ENCODE measurements at regions of chr7 and their contacts with region 1.

Region 1: DNA sequence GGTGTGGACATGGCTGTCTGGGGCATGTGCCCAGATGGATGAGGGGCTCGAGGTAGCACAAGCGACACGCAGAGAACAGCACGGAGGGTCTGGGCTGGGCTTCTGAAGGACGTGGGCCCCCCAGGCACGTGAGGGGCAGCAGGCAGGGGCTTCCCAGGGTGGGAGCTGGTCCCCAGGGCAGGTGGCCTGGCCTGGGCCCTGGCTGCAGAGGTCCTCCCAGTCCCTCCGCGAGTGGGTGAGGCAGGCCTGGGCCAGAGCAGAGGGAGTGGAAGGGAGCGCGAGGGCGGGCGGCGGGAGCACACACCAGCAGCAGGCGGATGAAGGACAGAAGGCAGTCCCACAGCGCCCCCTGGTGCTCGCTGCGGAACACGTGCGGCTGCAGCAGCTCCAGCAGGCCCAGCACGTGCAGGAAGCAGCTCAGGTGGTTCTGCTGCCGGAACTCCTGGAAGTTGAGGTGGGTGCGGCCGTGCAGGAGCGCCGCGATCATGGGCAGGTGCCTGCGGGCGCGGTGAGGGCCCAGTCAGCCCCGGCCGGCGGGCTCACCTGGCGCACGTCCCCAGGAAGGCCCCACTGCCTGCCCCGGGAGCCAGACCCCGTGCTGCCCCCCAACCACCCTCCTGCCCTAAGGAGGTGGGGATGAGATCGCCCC is 14.7 kb upstream of the MICALL2 start:
- DNase-seq: peak; percentile 97
- H3K4me3 ChIP-seq: no peak overlapping the region; a peak in 1 of 4 replicates
- H3K27ac ChIP-seq: no peak overlapping the region; a peak in 1 of 4 replicates
- H3K4me1 ChIP-seq: no peaks in the 10 kb centered on the region; a peak in 1 of 4 replicates
- H3K27me3 ChIP-seq: no peaks in the 10 kb centered on the region
- CTCF ChIP-seq: peak; percentile 93
- EP300 ChIP-seq: no peak
- RAD21 ChIP-seq: peak; percentile 80

Region 2: GRCh38 chr7:1439373-1440363 is 34.3 kb before region 1 on chr7:
- CTCF ChIA-PET with region 1: interaction called, 50 read pairs
- POLR2A ChIA-PET with region 1: no interaction called
- DNase-seq: no peak
- H3K4me3 ChIP-seq: no peak overlapping the region
- H3K27ac ChIP-seq: no peak overlapping the region
- H3K4me1 ChIP-seq: peaks cover 0 to 6% of the 10 kb centered on the region in 2 experiments; a peak in 1 of 4 replicates
- H3K27me3 ChIP-seq: no peaks in the 10 kb centered on the region
- CTCF ChIP-seq: no peak
- EP300 ChIP-seq: no peak
- RAD21 ChIP-seq: no peak

Region 3: GRCh38 chr7:1459522-1459892 is 14.5 kb before region 1 on chr7:
- CTCF ChIA-PET with region 1: interaction called, 108 read pairs
- POLR2A ChIA-PET with region 1: no interaction called
- DNase-seq: peak; percentile 100
- H3K4me3 ChIP-seq: peak overlapping the region; percentile 78 to 100
- H3K27ac ChIP-seq: peak overlapping the region in 1 of 2 experiments; percentile 96; a peak in 1 of 4 replicates
- H3K4me1 ChIP-seq: peaks cover 17 to 33% of the 10 kb centered on the region in 2 experiments; a peak in 3 of 4 replicates
- H3K27me3 ChIP-seq: no peaks in the 10 kb centered on the region
- CTCF ChIP-seq: no peak
- EP300 ChIP-seq: no peak
- RAD21 ChIP-seq: no peak

Region 4: DNA sequence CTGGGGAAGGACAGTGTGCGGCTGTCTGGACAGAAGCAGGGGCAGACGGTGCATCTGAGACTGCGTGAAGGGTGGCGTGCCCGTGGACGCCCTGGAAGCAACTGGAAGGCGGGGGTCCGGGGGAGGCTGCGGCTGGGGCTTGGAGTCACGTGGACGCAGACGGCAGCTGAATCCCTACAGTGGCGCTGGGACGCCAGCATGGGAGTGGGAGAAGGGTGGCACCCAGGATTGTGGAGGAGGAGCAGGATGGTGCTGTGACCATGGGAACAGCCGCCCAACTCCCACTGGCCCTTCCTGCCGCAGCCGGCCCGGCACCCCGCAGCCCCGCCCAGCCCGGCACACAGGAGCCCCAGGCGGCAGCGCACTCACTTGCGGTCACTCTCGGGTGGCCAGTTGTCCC is 20.5 kb after region 1 on chr7:
- CTCF ChIA-PET with region 1: interaction called, 104 read pairs
- POLR2A ChIA-PET with region 1: interaction called, 5 read pairs
- DNase-seq: no peak
- H3K4me3 ChIP-seq: no peak overlapping the region
- H3K27ac ChIP-seq: no peak overlapping the region
- H3K4me1 ChIP-seq: no peaks in the 10 kb centered on the region
- H3K27me3 ChIP-seq: no peaks in the 10 kb centered on the region
- CTCF ChIP-seq: no peak
- EP300 ChIP-seq: no peak
- RAD21 ChIP-seq: no peak

Region 5: GRCh38 chr7:1555809-1556540 is 82.0 kb after region 1 on chr7 and contains the start of gene TMEM184A:
- CTCF ChIA-PET with region 1: interaction called, 10 read pairs
- POLR2A ChIA-PET with region 1: no interaction called
- DNase-seq: peak; percentile 88
- H3K4me3 ChIP-seq: no peak within 1 kb of the TSS
- H3K27ac ChIP-seq: peak within 1 kb of the TSS in 1 of 2 experiments; percentile 16; a peak in 1 of 4 replicates
- H3K4me1 ChIP-seq: peaks cover 14% of the 10 kb centered on the region in 2 experiments; a peak in 3 of 4 replicates
- H3K27me3 ChIP-seq: no peaks in the 10 kb centered on the region
- CTCF ChIP-seq: peak; percentile 53
- EP300 ChIP-seq: no peak
- RAD21 ChIP-seq: peak; percentile 48
- polyA plus RNA-seq, gene TMEM184A: 1.5 and 1.8 TPM in 2 replicates

Region 6: DNA sequence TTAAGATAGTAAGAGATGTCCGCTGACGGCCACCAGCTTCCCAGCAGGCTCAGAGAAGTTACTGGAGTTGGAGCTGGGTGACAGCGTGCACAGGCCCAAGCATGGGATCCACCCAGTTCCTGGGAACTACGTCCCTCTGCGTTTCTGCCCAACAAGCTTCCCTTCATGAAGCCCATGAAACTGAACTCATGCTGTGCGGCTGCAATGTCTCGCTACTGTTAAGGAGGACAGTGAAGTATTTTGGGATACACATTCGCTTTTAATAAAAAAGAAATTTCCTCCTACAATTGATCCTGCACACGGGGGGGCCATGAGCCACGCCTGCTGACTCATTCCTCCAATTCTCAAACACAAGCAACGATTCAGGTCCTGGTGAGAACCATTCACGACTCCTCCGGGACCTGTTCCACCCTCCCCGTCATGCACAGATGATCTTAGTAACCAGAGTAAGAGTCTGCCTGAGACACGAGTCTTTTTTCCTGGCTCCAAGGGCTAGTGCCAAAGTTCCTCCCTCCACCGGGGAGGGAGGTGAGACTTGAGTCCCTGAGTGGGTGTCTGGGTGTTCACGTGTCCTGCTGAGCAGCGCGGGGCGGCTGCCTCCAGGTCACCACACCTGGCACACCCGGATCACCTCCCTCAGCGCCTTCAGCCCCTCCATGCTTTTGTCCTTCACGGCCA is 93.2 kb after region 1 on chr7:
- CTCF ChIA-PET with region 1: no interaction called
- POLR2A ChIA-PET with region 1: no interaction called
- DNase-seq: no peak
- H3K4me3 ChIP-seq: no peak overlapping the region
- H3K27ac ChIP-seq: peak overlapping the region in 1 of 2 experiments; percentile 53; a peak in 2 of 4 replicates
- H3K4me1 ChIP-seq: peaks cover 8 to 17% of the 10 kb centered on the region in 2 experiments; a peak in 3 of 4 replicates
- H3K27me3 ChIP-seq: no peaks in the 10 kb centered on the region
- CTCF ChIP-seq: no peak
- EP300 ChIP-seq: no peak
- RAD21 ChIP-seq: no peak

Region 7: DNA sequence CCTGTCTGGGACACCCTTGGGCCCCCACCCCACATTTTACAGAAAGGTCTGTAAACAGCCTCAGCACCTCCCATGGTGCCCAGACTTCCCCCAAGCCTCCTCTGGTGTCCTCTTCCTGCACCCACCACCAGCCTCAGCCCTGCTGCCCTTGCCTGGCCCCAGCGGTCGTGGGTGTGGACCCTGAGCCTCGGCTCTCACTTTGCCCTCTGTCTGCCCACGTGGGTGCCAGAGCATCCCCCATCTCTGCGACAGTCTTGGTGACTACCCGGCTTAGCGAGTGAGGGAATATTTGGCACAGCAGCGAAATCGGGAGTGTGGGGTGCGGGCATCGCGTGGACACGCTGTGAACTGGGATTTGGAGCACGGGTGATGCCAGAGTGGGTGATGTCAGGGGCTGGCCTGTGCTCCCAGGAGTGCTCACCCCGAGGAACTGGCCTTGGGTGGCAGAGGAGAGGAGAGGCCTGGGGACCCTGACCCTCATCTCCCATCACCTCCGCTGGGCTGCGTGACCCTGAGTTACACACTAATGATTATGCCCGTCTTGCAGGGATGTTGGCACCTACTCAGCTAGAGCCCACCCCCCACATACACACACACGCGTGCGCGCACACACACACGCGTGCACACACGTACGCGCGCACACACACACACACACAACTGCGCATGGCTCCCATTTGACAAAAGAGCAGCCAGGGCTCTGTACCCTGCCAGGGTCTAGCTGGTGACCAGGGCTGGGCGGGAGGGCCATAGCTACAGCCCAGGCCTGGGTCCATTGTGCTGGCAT is 204.7 kb after region 1 on chr7:
- CTCF ChIA-PET with region 1: no interaction called
- POLR2A ChIA-PET with region 1: no interaction called
- DNase-seq: peak; percentile 30
- H3K4me3 ChIP-seq: no peak overlapping the region
- H3K27ac ChIP-seq: no peak overlapping the region; a peak in 1 of 4 replicates
- H3K4me1 ChIP-seq: peaks cover 0 to 56% of the 10 kb centered on the region in 2 experiments; a peak in 1 of 4 replicates
- H3K27me3 ChIP-seq: peaks cover 10% of the 10 kb centered on the region
- CTCF ChIP-seq: no peak
- EP300 ChIP-seq: no peak
- RAD21 ChIP-seq: no peak